OCI-LY7 (cell line): ENCODE measurements at regions of chr14 and their contacts with region 1.

Region 1: GRCh38 chr14:61730756-61731373 is 31.4 kb upstream of the SNAPC1 start:
- DNase-seq: peak; percentile 46
- H3K4me3 ChIP-seq: no peak overlapping the region
- H3K27ac ChIP-seq: peak overlapping the region; percentile 21
- H3K4me1 ChIP-seq: peaks cover 22% of the 10 kb centered on the region
- CTCF ChIP-seq: peak; percentile 93

Region 2: GRCh38 chr14:61461808-61462275 is 269.0 kb before region 1 on chr14:
- CTCF ChIA-PET with region 1: no interaction called
- POLR2A ChIA-PET with region 1: no interaction called
- intact Hi-C with region 1: loop called (anchors 1 kb)
- DNase-seq: peak; percentile 80
- H3K4me3 ChIP-seq: no peak overlapping the region
- H3K27ac ChIP-seq: no peak overlapping the region
- H3K4me1 ChIP-seq: peaks cover 30% of the 10 kb centered on the region
- CTCF ChIP-seq: peak; percentile 95

Region 3: DNA sequence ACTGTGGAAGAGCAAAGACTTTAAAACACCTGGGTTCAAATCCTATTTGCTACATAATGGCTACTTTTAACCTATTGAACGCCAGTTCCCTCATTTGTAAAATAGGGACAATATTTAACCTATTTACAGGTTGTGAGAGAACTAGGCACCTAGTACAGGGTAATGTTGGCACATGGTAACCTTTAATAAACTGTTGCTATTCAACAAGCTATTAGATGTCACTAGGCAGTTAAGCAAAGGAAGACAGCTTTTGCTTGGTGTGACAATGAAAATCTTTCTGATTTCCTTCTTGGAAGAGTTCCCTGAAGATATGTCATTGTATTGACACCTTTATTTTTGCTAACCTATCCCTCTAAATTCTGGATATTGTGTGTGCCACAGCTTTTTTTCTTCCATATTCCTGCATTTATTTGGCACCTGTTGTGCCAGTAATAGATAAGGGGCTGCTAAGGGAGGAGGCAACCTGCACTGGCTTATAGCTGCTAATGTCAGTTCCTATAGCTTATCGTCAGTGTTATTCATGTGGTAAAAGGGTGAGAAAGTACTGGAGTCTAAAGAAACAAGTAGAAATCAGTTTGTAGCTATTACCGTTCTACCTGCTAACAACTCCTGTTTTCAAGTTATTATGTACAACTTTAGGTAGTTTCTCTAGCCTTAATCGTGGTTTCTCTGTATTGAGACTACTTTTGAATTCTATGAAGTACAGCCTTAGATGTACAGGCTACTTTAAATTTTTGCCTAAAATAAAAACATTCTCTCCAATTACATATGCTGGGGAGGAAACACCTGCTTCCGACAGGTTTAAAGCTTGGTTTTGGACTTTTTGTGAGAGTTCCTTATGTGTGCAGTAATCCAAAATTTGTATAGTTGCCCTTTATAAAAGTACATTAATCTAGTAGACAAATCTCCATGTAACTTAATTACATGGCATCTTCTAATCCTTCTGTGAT is 11.2 kb before region 1 on chr14:
- CTCF ChIA-PET with region 1: interaction called, 5 read pairs
- POLR2A ChIA-PET with region 1: interaction called, 17 read pairs
- intact Hi-C with region 1: no loop called
- DNase-seq: peak; percentile 63
- H3K4me3 ChIP-seq: peak overlapping the region; percentile 62
- H3K27ac ChIP-seq: peak overlapping the region; percentile 88
- H3K4me1 ChIP-seq: peaks cover 68% of the 10 kb centered on the region
- CTCF ChIP-seq: no peak